ENCODE measurements at regions of chr16 and their contacts with region 1.

Region 1: DNA sequence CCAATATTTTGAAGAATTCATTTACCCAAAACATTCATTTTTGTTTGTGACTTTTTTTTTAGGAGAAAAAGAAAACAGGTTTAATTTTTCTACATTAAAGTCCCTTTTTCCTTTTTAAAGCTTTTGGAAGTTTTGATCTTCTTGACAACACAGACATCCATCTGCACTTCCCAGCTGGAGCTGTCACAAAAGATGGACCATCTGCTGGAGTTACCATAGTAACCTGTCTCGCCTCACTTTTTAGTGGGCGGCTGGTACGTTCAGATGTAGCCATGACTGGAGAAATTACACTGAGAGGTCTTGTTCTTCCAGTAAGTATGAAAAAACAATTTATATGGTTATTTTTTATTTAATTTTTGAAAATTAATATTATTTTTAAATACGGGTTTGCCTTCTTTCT is 37.2 kb downstream of the SIAH1 start:
- DNase-seq: no peak
- H3K4me3 Mint-ChIP-seq: no peak overlapping the region
- H3K27ac Mint-ChIP-seq: no peak overlapping the region
- H3K4me1 Mint-ChIP-seq: no peaks in the 10 kb centered on the region
- H3K27me3 Mint-ChIP-seq: no peaks in the 10 kb centered on the region

Region 2: DNA sequence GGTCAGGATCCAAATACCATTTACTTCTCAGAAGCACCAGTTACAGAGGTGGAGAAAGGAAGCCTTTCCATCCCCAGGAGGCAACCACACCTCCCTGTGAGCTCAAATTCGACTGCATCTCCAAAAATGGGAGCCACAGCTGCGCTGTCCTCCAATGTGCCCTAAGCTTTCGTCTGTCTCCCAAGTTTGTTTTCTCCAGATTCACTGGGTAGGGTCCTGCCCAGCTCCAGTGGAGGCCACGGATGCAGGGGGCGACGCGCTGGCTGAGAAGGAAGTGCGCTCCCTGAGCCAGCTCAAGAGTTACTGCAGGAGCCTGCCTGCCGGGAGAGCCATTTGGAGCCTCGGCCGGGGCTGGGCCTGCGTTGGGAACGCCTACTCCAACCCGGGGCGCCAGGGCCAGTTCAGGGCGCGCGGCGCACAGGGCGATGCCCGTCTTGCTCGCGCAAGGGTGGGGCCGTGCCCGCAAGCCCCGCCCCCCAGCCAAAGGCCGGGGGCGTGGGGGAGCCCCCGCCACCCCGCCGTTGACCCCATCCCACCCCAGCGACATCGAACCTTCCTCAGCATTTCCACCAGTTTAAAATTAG is 17.7 kb after region 1 on chr16:
- intact Hi-C with region 1: loop called (anchors 2 kb)
- DNase-seq: peak; percentile 78
- H3K4me3 Mint-ChIP-seq: peak overlapping the region; percentile 89
- H3K27ac Mint-ChIP-seq: peak overlapping the region; percentile 95
- H3K4me1 Mint-ChIP-seq: peaks cover 53% of the 10 kb centered on the region
- H3K27me3 Mint-ChIP-seq: no peaks in the 10 kb centered on the region

Region 3: GRCh38 chr16:48405153-48405882 is 57.3 kb after region 1 on chr16:
- intact Hi-C with region 1: no loop called
- DNase-seq: no peak
- H3K4me3 Mint-ChIP-seq: no peak overlapping the region
- H3K27ac Mint-ChIP-seq: no peak overlapping the region
- H3K4me1 Mint-ChIP-seq: peaks cover 3% of the 10 kb centered on the region
- H3K27me3 Mint-ChIP-seq: peaks cover 6% of the 10 kb centered on the region

Region 4: GRCh38 chr16:48637039-48637438 is 289.1 kb after region 1 on chr16:
- intact Hi-C with region 1: no loop called
- DNase-seq: no peak
- H3K4me3 Mint-ChIP-seq: no peak overlapping the region
- H3K27ac Mint-ChIP-seq: no peak overlapping the region
- H3K4me1 Mint-ChIP-seq: no peaks in the 10 kb centered on the region
- H3K27me3 Mint-ChIP-seq: no peaks in the 10 kb centered on the region